Activated T-helper 1 cell treated with anti-CD3 and anti-CD28 coated beads, Interleukin-12 subunit alpha, Interleukin-12 subunit beta, Interleukin-2, Interleukin-4 antibody, amounts not matched to agents 30 ng/mL and 10 ng/mL and 1 ng/mL, durations not matched to agents 14 hours and 24 hours and 36 hours (primary cell): ENCODE measurements at regions of chr12 and their contacts with region 1.

Region 1: DNA sequence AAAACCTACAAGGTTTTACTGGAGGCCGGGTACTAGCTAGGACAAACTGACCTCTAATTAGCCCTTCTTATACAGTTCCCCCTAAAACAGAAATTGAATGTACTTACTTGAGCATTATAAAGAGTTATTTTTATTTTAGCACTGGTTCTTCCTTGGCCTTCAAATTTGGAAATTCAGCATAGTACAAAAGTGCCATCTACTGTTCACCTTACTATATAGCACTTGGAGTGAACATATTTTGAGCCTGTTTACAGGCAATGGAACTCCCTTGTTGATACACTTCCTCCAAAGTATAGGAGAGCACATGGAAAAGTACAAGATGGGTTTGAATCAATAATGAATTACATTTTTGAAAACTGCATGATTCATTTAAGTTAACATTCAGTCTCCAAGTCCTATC is 3.9 kb upstream of the POC1B start:
- DNase-seq: no peak
- H3K4me3 Mint-ChIP-seq: no peak overlapping the region
- H3K27ac Mint-ChIP-seq: no peak overlapping the region
- H3K4me1 Mint-ChIP-seq: peaks cover 25% of the 10 kb centered on the region
- H3K27me3 Mint-ChIP-seq: no peaks in the 10 kb centered on the region

Region 2: DNA sequence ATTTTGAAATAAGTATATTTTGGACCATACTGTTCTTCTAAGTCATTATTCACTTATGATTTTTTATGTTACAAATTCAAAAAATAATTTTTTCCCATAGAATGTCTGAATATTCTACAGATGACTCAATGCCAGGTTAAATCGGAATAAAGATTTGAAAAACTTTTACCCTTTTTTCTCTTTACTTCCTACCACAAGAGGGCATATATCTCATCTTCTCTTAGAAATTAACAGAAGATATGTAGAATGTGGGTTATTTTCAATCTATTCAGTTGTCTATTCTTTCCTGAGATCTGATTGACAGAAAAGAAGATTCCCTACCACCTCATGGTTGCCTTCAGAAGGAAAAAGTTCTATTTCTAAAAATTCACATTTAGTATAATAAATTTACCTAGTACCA is 896.4 kb before region 1 on chr12:
- intact Hi-C with region 1: loop called (anchors 2 kb)
- DNase-seq: no peak
- H3K4me3 Mint-ChIP-seq: no peak overlapping the region
- H3K27ac Mint-ChIP-seq: no peak overlapping the region
- H3K4me1 Mint-ChIP-seq: no peaks in the 10 kb centered on the region
- H3K27me3 Mint-ChIP-seq: no peaks in the 10 kb centered on the region

Region 3: GRCh38 chr12:89051065-89051677 is 478.6 kb before region 1 on chr12:
- intact Hi-C with region 1: loop called (anchors 1 kb)
- DNase-seq: no peak
- H3K4me3 Mint-ChIP-seq: no peak overlapping the region
- H3K27ac Mint-ChIP-seq: no peak overlapping the region
- H3K4me1 Mint-ChIP-seq: peaks cover 31% of the 10 kb centered on the region
- H3K27me3 Mint-ChIP-seq: no peaks in the 10 kb centered on the region

Region 4: DNA sequence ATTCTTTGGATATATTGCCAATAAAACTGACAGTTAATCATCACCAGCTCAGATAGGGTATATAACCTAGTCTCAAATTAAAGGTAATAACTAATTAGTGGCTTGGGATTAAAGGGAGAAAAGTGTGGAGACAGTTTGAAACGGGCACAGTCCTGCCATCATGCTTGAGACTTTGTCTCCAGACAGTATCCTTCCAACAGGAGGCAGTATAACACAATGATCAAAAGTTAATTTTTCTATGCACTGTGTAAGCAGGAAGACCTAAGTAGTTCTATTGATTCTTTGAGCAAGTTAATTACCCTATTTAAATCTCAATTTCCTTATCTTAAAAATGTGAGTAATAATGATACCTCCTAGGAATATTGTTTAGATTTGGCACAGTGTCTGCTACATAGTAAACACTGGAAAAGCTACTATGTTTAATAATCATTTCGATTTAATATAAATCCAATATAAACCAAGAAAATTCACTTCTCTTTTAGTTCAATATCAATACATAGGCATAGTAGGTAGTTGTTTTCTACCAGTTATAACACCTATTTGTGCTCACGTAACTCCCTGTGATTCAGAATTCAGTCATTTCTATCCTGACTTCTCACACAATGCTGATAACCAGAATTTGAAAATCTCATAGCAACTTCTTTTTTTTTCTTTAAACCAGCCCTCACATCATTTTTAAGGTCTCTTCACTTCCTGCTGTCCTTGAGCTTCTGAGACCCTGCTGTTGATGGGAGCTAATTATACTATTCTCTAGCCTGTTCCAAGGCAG is 58.8 kb before region 1 on chr12:
- intact Hi-C with region 1: loop called (anchors 1 kb)
- DNase-seq: no peak
- H3K4me3 Mint-ChIP-seq: no peak overlapping the region
- H3K27ac Mint-ChIP-seq: peak overlapping the region; percentile 22
- H3K4me1 Mint-ChIP-seq: peaks cover 76% of the 10 kb centered on the region
- H3K27me3 Mint-ChIP-seq: no peaks in the 10 kb centered on the region